ENCODE measurements at regions of chr12 and their contacts with region 1.

Region 1: DNA sequence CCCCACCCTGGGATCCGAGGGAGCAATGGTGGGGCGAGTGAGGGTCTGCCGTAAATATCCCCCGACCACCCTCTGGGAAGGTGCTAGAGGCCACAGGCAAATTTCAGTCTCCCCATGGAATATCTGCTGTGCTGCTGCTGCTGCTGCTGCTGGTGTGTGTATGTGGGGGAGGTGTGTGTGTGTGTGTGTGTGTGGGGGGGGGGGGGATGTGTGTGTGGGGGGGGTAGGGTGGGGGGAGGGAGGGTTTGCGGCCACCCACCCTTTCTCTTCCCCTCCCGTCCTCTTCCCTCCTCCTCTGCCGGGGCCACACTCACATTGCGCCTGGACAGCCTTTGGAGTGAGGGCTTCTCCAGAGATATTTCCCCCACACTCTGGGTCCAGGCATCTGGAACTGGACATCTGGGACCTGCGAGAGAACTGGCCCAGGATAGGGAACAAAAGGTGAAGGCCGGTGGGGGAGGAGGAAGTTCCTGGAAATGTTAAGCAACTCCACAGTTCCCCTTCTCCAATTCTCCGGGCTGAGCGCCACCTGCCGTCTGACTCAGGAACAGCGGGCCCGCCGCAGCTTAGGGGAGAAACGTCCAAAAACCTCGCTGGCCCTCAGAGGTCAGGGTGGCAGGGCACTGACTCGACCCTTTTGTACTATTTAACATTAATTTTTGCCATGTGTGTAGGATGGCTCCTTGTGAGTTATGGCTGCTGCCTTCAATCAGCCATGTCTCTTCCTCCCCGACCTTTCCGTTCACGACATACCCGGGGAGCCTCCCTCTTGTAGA is at the start of gene C1RL:
- DNase-seq: peak; percentile 72 to 91
- H3K4me3 ChIP-seq: peak within 1 kb of the TSS; percentile 79
- H3K27ac ChIP-seq: peak within 1 kb of the TSS; percentile 76
- H3K4me1 ChIP-seq: peaks cover 28% of the 10 kb centered on the region
- H3K27me3 ChIP-seq: no peaks in the 10 kb centered on the region
- CTCF ChIP-seq: peak; percentile 97
- total RNA-seq, gene C1RL: 70.4 and 72.9 TPM in 2 replicates

Region 2: DNA sequence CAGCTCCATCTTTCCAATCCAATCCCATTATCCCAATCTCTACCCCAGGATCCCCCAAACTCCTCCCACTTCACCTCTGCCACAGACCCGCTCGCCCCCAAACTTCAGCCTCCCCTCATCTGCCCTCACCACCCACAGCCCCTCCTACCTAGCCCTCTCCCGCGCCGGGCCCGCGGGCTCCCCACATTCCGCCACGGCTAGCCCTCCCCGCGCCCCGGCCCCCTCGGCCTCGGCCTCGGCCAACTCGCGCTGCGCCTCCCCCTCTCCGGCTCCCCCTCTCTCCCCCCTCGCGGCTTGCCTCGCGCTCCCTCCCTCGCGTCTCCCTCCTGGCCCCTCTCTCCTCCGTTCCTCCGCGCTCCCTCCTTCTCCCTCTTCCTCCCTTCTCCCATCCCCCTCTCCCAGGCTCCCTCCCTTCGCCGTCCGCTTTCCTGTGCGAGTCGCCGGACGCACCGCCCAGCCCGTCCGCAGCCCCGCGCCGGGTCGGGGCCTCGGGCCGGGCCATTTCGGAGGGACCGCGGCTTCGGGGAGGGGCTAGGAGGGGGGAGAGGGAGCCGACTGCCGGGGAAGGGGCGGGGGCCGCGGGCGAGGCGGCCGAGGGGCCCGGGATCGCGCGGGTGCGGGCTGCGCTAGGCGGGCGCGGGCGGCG is 181.5 kb before region 1 on chr12 and contains the start of gene ATN1:
- CTCF ChIA-PET with region 1: interaction called, 9 read pairs
- POLR2A ChIA-PET with region 1: interaction called, 7 read pairs
- intact Hi-C with region 1: loop called (anchors 1 kb)
- DNase-seq: peak in 1 of 2 experiments; percentile 66
- H3K4me3 ChIP-seq: peak within 1 kb of the TSS; percentile 85
- H3K27ac ChIP-seq: peak within 1 kb of the TSS; percentile 75
- H3K4me1 ChIP-seq: peaks cover 53% of the 10 kb centered on the region
- H3K27me3 ChIP-seq: no peaks in the 10 kb centered on the region
- CTCF ChIP-seq: no peak
- total RNA-seq, gene ATN1: 158 and 159 TPM in 2 replicates

Region 3: DNA sequence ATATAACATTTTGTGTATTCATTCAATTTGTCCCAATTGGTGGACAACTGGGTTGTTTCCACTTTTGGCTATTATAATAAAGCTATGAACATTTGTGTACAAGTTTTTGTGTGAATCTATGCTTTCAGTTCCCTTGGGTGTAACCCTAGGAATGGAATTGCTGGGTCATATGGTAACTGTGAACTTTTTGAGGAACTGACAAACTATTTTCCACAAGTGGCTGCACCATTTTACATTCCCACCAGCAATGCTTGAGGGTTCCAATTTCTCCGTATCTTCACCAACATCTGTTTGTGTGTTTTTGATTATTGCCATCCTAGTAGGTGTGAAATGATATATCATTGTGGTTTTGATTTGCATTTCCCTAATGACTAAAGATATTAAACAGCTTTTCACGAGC is 103.7 kb before region 1 on chr12:
- CTCF ChIA-PET with region 1: interaction called, 3 read pairs
- POLR2A ChIA-PET with region 1: interaction called, 18 read pairs
- intact Hi-C with region 1: no loop called
- DNase-seq: no peak
- H3K4me3 ChIP-seq: no peak overlapping the region
- H3K27ac ChIP-seq: no peak overlapping the region
- H3K4me1 ChIP-seq: no peaks in the 10 kb centered on the region
- H3K27me3 ChIP-seq: no peaks in the 10 kb centered on the region
- CTCF ChIP-seq: no peak

Region 4: DNA sequence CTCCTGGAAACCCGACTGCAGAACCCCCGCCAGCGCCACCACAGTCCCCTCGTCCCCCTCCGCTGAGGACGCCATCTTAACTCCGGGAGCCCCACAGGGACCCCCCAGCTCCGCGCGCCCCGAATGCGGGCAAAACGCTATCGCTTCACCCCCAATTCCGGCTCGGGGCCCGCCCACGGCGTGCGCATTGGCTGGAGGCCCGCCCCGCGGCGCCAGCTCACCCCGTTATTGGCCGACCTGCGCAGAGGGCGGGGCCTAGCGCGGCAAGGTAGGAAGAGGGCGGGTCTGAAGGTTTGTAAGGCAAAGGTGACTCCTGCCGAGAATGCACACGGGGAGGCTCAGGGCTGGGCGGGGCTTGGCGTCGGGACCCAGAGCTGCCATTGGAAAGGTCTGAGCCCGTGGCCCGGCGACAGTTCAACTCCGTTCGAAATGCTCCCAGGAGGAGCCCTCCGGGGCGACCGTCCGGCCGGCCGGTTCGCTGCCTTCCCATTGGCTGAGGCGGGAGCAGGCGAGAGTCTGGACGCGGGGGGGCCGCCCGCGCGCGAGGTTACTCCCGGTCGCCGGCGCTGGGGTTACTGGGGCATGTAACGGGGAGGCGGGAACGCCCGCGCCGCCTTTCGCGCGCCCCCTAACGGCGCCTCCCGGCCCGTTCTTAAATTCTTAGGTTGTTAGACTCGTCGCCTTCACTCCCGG is 90.5 kb before region 1 on chr12 and contains the start of gene LPCAT3:
- CTCF ChIA-PET with region 1: no interaction called
- POLR2A ChIA-PET with region 1: no interaction called
- intact Hi-C with region 1: loop called (anchors 1 kb)
- DNase-seq: peak; percentile 96 to 100
- H3K4me3 ChIP-seq: peak within 1 kb of the TSS; percentile 79
- H3K27ac ChIP-seq: peak within 1 kb of the TSS; percentile 74
- H3K4me1 ChIP-seq: peaks cover 37% of the 10 kb centered on the region
- H3K27me3 ChIP-seq: no peaks in the 10 kb centered on the region
- CTCF ChIP-seq: peak; percentile 83
- total RNA-seq, gene LPCAT3: 53.8 and 102 TPM in 2 replicates

Region 5: GRCh38 chr12:7060353-7060954 is 48.5 kb before region 1 on chr12 and contains the start of gene C1S:
- CTCF ChIA-PET with region 1: interaction called, 4 read pairs
- POLR2A ChIA-PET with region 1: interaction called, 3 read pairs
- intact Hi-C with region 1: loop called (anchors 1 kb)
- DNase-seq: peak; percentile 68 to 69
- H3K4me3 ChIP-seq: no peak within 1 kb of the TSS
- H3K27ac ChIP-seq: no peak within 1 kb of the TSS
- H3K4me1 ChIP-seq: peaks cover 16% of the 10 kb centered on the region; the same call in 1 of the 2 replicates
- H3K27me3 ChIP-seq: peaks cover 2% of the 10 kb centered on the region; the same call in 1 of the 2 replicates
- CTCF ChIP-seq: peak; percentile 73
- total RNA-seq, gene C1S: 32.4 and 32.9 TPM in 2 replicates

Region 6: DNA sequence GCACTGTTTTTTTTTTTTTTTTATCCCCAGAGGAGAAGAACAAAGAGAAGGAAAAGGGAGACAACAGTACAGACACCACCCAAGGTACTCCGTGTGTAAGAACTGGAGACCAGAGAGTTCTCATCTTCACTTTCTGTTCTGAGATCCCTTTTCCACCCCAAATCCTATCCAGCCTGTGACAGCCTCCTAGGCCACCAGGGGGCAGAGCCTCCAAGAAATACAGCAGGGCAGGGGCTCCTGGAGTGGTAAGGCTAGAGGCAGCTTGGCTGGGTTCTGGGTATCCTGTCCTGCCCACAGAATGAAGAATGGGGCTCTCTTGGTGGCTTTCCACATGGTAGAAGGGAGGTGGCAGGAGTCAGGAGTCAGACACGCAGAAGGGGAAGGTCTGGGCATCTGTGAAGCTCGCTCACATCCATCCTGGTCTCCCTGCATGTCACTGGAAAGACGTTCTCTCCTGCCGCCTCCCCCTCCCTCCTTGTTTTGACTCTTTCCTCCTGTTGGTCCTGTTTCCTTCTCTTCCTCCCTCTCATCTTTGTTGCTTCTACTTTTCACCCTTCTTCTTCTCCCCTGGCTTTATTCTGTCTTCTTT is 33.2 kb after region 1 on chr12:
- CTCF ChIA-PET with region 1: no interaction called
- POLR2A ChIA-PET with region 1: no interaction called
- intact Hi-C with region 1: no loop called
- DNase-seq: peak; percentile 52 to 61
- H3K4me3 ChIP-seq: no peak overlapping the region
- H3K27ac ChIP-seq: no peak overlapping the region
- H3K4me1 ChIP-seq: no peaks in the 10 kb centered on the region
- H3K27me3 ChIP-seq: no peaks in the 10 kb centered on the region
- CTCF ChIP-seq: peak; percentile 91

Measured in PC-9 (cell line).